Heart right ventricle (tissue), 16 donors: ENCODE measurements at regions of chr7 and their contacts with region 1.

Region 1: DNA sequence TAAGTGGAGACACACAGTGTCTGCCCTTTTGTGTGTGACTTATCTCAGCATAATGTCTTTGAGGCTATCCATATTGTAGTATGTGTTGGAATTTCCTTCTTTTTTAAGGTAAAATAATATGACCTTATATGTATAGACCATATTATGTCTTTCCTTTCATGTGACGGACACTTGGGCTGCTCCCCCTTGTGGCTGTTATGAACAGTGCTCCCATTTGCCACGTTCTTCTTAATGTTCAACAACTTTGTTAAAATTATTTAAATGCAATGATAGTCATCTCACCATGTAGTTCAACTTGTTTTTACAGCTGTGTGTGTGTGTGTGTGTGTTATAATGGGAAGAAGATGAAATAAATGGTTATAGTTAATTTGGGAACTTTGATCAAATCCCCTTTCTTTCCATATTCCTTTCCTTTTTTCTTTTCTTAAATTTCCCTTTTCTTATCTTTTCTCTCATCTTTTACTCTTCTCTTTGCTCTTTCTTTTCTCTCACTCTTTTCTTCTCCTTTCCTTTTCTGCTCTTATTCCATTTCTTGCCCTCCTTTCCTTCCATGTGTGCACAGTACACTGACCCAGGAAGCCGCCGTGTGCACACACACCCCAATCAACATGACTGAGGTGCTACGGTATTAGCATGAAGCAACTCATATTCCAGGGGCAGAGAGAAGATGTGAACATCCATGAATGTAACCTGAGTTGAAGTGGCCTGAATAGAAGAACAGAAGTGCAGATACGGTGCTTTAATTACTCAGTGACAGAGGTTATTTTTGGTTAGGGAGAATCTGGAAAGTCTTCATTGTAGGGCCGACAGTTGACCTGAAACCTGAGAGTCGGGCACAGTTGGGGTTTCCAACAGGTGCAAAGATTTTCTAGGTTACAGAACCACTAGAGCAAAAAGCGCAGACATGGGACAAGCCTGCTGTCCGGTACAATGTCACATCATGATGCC is 596.7 kb downstream of the SDK1 start:
- DNase-seq: no peak
- ATAC-seq: no peak
- H3K4me3 ChIP-seq: no peak overlapping the region
- H3K27ac ChIP-seq: no peak overlapping the region
- H3K4me1 ChIP-seq: no peaks in the 10 kb centered on the region
- H3K27me3 ChIP-seq: no peaks in the 10 kb centered on the region
- CTCF ChIP-seq: peak; percentile 51 to 85 (median 77)

Region 2: GRCh38 chr7:2863461-2864066 is 1034.1 kb before region 1 on chr7:
- intact Hi-C with region 1: loop called in 5 of 10 experiments (anchors 2 to 10 kb)
- DNase-seq: peak; percentile 81 to 84
- ATAC-seq: peak; percentile 93 to 97 (median 94)
- H3K4me3 ChIP-seq: peak overlapping the region in 6 of 10 donors; percentile 16 to 29 (median 24)
- H3K27ac ChIP-seq: peak overlapping the region; percentile 64 to 96 (median 88)
- H3K4me1 ChIP-seq: peaks cover 0 to 31% (median 20%) of the 10 kb centered on the region in 9 donors
- H3K27me3 ChIP-seq: no peaks in the 10 kb centered on the region
- CTCF ChIP-seq: no peak

Region 3: DNA sequence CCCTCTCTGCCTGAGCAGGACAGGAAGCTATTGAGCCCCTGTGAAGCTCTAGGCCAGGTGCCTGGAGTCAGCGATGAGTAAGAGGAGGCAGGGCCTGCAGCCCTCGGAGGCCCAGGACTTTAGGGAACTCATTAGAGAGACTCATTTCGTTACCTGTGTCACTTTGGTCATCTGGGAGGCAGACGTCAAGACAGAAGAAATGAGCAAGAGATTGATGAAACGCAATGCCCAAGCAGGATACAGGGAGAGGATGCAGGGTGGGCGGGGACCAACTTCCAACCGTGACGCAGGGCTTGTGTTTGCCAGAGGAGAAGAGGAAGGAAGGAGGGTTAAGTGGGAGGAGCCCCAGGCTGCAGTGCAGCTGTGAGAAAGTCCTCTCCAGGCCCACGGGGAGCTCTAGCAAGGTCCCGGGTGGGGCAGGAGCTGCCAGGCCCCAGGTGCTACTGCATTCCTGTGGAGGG is 1027.2 kb before region 1 on chr7:
- intact Hi-C with region 1: loop called in 6 of 10 experiments (anchors 2 to 10 kb)
- DNase-seq: peak; percentile 73 to 87
- ATAC-seq: peak; percentile 83 to 95 (median 92)
- H3K4me3 ChIP-seq: peak overlapping the region in 6 of 10 donors; percentile 9 to 44 (median 31)
- H3K27ac ChIP-seq: peak overlapping the region in 7 of 10 donors; percentile 19 to 59 (median 47)
- H3K4me1 ChIP-seq: peaks cover 0 to 22% (median 13%) of the 10 kb centered on the region in 9 donors
- H3K27me3 ChIP-seq: peaks cover 0 to 4% (median 0%) of the 10 kb centered on the region in 7 donors
- CTCF ChIP-seq: no peak

Region 4: GRCh38 chr7:2886900-2887299 is 1010.8 kb before region 1 on chr7:
- intact Hi-C with region 1: loop called in 3 of 10 experiments (anchors 10 kb)
- DNase-seq: peak in 1 of 2 donors; percentile 45
- ATAC-seq: peak in 7 of 8 donors; percentile 42 to 82 (median 68)
- H3K4me3 ChIP-seq: no peak overlapping the region
- H3K27ac ChIP-seq: no peak overlapping the region
- H3K4me1 ChIP-seq: no peaks in the 10 kb centered on the region
- H3K27me3 ChIP-seq: peaks cover 0 to 4% (median 0%) of the 10 kb centered on the region in 7 donors
- CTCF ChIP-seq: peak; percentile 20 to 66 (median 55)

Region 5: GRCh38 chr7:2894118-2894940 is 1003.4 kb before region 1 on chr7:
- intact Hi-C with region 1: loop called in 3 of 10 experiments (anchors 10 kb)
- DNase-seq: no peak
- ATAC-seq: no peak
- H3K4me3 ChIP-seq: peak overlapping the region in 1 of 10 donors; percentile 32
- H3K27ac ChIP-seq: peak overlapping the region in 1 of 10 donors; percentile 14
- H3K4me1 ChIP-seq: no peaks in the 10 kb centered on the region
- H3K27me3 ChIP-seq: peaks cover 0 to 42% (median 18%) of the 10 kb centered on the region in 7 donors
- CTCF ChIP-seq: no peak

Region 6: DNA sequence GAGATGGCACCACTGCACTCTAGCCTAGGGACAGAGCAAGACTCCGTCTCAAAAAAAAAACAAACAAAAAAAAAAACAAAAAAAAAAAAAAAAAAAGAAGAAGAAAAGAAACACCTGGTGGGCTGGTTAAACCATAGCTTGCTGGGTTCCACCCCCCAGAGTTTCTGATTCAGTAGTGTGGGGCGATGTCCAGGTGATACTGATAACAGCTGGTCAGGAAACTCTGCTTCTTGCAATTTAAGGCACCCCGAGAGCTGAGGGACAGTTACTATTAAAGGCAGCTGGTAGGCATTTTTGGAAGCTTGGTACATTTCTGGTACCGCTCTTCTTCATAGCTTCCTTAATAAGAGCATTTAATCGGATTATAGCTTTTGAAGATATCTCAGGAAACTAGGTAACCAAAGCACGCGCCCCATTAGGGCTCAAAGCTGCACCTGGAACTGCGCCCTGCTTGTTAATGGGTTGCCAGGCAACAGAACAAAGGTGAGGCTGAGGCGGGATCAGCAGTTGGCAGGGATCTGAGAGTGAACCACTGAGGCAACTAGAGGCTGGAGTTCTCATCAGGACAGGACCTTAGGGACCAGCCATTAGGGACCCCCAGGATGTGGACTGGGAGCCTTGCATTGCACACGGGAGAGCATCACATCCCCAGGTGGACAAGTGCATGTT is 603.1 kb before region 1 on chr7:
- intact Hi-C with region 1: loop called in 4 of 10 experiments (anchors 5 to 10 kb)
- DNase-seq: no peak
- ATAC-seq: no peak
- H3K4me3 ChIP-seq: no peak overlapping the region
- H3K27ac ChIP-seq: no peak overlapping the region
- H3K4me1 ChIP-seq: no peaks in the 10 kb centered on the region
- H3K27me3 ChIP-seq: peaks cover 0 to 28% (median 13%) of the 10 kb centered on the region in 7 donors
- CTCF ChIP-seq: no peak

Region 7: GRCh38 chr7:3300651-3301378 is 596.9 kb before region 1 on chr7 and contains the start of gene SDK1:
- intact Hi-C with region 1: loop called in 8 of 10 experiments (anchors 5 to 10 kb)
- DNase-seq: peak; percentile 91 to 94
- ATAC-seq: peak; percentile 94 to 99 (median 98)
- H3K4me3 ChIP-seq: peak within 1 kb of the TSS; percentile 32 to 67 (median 56)
- H3K27ac ChIP-seq: peak within 1 kb of the TSS in 2 of 10 donors; percentile 19 to 49
- H3K4me1 ChIP-seq: peaks cover 0 to 24% (median 9%) of the 10 kb centered on the region in 9 donors
- H3K27me3 ChIP-seq: peaks cover 0 to 54% (median 16%) of the 10 kb centered on the region in 7 donors
- CTCF ChIP-seq: peak; percentile 79 to 97 (median 93)
- total RNA-seq, gene SDK1: 1.0 to 5.3 (median 3.7) TPM